ENCODE measurements at regions of chr19 and their contacts with region 1.

Region 1: DNA sequence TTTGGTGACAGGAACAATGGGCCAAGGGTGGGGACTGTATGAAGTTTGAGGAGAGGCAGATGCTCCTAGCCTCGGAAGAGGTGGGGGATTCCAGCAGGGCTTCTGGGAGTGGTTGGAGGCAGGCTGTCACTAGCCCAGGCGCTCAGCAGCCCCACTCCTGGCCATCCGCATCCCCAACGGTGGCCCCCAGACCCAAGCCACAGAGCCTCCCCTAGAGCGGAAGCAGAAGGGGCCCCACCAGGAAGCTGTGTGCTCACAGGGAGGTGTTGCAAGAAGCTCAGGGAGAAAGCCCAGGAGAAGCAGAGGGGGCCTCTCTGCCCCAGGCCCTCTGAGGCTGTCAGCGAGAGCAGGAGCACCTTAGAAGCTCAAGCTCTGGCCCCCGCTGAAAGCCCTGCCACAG is 8.3 kb downstream of the PRAM1 start:
- DNase-seq: no peak

Region 2: DNA sequence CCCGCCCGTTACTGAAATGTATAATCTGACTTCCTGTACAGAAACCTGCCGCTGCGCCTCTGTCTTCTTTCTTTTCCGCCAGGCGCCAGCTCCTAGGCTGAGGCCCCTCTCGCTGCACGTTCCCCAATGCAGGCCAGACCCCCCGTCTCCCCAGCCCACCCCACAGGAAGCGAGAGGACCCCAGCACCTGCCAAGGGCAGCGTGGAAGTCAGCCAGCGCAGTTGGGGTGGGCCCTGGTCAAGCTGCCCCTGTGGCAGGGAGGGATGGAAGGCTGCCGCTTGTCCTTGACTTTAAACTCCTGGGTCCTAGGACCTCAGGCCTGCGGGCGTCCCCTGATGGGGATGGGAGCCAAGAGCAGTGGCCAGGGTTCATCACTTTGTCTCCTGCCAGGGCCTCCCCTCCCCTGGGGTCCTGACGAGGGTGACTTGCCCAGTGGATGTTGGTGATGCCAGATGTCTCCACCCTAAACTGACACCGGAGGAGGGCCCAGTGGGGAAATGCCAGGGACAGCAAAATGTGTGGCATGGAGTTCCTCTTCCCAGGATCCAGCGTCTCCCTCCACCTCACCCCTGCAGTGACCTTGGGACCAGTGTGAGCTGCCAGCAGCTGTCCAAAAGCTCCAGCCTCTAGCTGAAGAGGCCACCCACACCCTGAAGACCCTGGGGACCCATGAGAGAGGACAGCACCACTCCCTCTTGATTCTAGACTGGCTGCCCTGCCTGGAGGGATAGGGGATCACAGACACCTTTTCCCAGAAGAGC is 89.6 kb before region 1 on chr19:
- intact Hi-C with region 1: loop called in 1 of 2 experiments (anchors 10 kb)
- DNase-seq: no peak